MCF 10A (cell line): ENCODE measurements at regions of chr6 and their contacts with region 1.

Region 1: DNA sequence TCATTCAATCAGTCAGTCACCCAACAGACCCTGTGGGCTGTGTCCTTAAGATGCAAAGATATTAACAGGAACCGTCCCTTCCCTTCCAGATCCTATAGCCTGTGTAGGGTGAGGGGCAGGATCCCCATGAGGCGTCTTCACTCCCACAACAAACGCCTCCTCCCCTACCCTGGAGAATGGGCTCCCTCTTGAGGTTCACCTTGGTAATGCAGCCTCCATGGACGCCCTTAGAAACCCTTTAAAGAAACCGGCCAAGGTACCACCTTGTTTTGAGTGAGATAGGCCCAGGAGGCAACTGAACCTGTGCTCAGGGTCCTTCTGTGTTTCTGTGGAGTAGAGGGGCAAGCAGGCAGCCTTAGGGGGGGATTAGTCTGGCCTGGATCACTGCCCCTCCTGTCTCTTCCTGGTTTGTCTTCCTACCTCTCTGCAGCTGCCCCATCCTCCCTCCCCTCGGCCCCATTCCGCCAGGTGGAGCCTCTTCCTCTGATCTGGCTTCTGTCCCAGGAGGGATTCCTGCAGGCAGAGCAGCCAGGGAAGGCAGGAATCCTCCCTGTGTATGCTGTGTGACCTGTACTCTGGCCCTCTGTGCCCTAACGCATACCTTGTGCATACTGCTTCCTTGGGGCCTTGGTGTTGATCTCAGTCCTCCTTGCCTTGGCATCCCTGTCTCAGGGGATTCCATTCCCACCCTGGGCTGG is 6.6 kb upstream of the GUCA1A start:
- DNase-seq: peak; percentile 85
- H3K4me3 Mint-ChIP-seq: no peak overlapping the region
- H3K27ac Mint-ChIP-seq: peak overlapping the region; percentile 22
- H3K4me1 Mint-ChIP-seq: peaks cover 8% of the 10 kb centered on the region
- H3K27me3 Mint-ChIP-seq: no peaks in the 10 kb centered on the region
- CTCF ChIP-seq: peak; percentile 97

Region 2: DNA sequence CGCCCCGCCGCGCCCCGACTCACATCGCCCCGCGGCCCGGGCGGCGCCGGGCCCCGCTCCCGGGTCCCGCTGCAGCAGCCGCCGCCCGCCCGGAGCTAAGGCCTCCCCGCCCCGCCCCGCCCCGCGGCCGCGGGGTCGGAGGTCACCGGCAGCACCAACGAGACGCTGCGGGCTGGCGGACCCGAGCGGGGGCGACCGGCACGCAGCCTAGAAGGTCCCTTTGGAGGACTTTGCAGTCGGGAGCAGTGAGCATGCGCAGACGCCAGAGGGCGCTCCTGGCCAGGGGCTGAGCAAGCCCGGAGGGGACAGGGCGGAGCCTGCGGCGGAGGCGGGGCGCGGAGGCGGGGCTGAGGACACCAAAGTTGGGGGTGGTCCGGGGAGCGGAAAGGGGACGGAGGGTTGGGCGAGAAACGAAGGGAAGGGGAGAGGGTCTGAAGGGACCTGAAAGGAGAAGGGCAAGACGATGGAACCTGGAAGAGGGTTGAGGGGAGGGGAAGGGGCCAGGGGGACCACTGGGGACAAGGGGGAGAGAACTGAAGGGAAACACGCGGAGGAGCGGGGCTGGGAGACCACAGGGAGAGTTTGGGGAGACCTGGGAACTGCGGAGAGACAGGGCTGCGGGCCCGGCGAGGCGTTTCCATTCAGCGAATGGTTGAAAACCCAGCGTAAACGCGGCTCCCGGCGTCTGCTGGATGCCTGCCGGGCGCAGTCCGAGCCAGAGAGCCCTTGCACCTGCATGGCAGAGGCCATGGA is 386.6 kb before region 1 on chr6 and contains the start of gene FRS3:
- CTCF ChIA-PET with region 1: no interaction called
- POLR2A ChIA-PET with region 1: no interaction called
- intact Hi-C with region 1: loop called (anchors 1 kb)
- DNase-seq: peak; percentile 90
- H3K4me3 Mint-ChIP-seq: peak within 1 kb of the TSS; percentile 90
- H3K27ac Mint-ChIP-seq: no peak within 1 kb of the TSS
- H3K4me1 Mint-ChIP-seq: peaks cover 23% of the 10 kb centered on the region
- H3K27me3 Mint-ChIP-seq: no peaks in the 10 kb centered on the region
- CTCF ChIP-seq: peak; percentile 94
- total RNA-seq, gene FRS3: 3.9 and 5.3 TPM in 2 replicates

Region 3: GRCh38 chr6:42030585-42031506 is 135.7 kb before region 1 on chr6:
- CTCF ChIA-PET with region 1: no interaction called
- POLR2A ChIA-PET with region 1: no interaction called
- intact Hi-C with region 1: no loop called
- DNase-seq: no peak
- H3K4me3 Mint-ChIP-seq: no peak overlapping the region
- H3K27ac Mint-ChIP-seq: no peak overlapping the region
- H3K4me1 Mint-ChIP-seq: peaks cover 21% of the 10 kb centered on the region
- H3K27me3 Mint-ChIP-seq: no peaks in the 10 kb centered on the region
- CTCF ChIP-seq: no peak

Region 4: DNA sequence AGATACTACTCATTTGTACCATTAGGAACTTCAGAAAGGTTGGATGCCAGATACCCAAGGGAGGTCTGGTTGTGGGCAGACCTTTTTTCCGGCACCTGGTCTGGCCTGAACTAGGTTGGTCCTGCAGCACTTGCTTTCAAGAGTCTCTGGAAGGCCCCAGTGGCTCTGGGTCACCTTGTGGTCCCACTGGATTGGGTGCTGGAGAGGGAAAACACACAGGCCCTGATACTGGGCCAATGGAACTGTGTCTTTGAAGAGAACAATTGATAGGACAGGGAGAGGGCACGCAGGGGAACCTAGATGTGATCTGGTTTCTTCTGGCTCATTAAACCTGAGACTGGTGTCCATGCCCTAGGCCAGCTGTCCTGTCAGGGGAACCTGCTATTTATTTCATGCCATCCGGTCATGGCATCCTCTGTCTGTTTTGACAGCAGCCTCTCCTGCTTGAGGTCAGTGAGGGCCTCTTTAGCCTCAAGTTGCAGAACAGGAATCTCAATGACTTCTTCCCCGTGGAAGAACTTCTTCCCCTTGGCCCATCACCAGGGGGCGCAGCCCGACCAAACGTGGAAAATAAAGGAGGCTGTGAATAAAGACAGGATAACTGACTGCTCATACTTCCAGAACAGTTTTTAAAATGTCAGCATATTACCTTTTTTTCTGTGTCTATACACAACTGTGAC is 91.3 kb before region 1 on chr6:
- CTCF ChIA-PET with region 1: interaction called, 28 read pairs
- POLR2A ChIA-PET with region 1: no interaction called
- intact Hi-C with region 1: loop called (anchors 1 kb)
- DNase-seq: peak; percentile 69
- H3K4me3 Mint-ChIP-seq: no peak overlapping the region
- H3K27ac Mint-ChIP-seq: no peak overlapping the region
- H3K4me1 Mint-ChIP-seq: no peaks in the 10 kb centered on the region
- H3K27me3 Mint-ChIP-seq: no peaks in the 10 kb centered on the region
- CTCF ChIP-seq: peak; percentile 82

Region 5: GRCh38 chr6:42099340-42100028 is 67.1 kb before region 1 on chr6:
- CTCF ChIA-PET with region 1: interaction called, 5 read pairs
- POLR2A ChIA-PET with region 1: interaction called, 6 read pairs
- intact Hi-C with region 1: loop called (anchors 1 kb)
- DNase-seq: peak; percentile 97
- H3K4me3 Mint-ChIP-seq: peak overlapping the region; percentile 15
- H3K27ac Mint-ChIP-seq: peak overlapping the region; percentile 46
- H3K4me1 Mint-ChIP-seq: peaks cover 30% of the 10 kb centered on the region
- H3K27me3 Mint-ChIP-seq: no peaks in the 10 kb centered on the region
- CTCF ChIP-seq: no peak

Region 6: GRCh38 chr6:42142118-42142931 is 24.3 kb before region 1 on chr6 and contains the start of gene C6orf132:
- CTCF ChIA-PET with region 1: interaction called, 6 read pairs
- POLR2A ChIA-PET with region 1: interaction called, 5 read pairs
- intact Hi-C with region 1: loop called (anchors 1 kb)
- DNase-seq: peak; percentile 63
- H3K4me3 Mint-ChIP-seq: peak within 1 kb of the TSS; percentile 66
- H3K27ac Mint-ChIP-seq: peak within 1 kb of the TSS; percentile 55
- H3K4me1 Mint-ChIP-seq: peaks cover 22% of the 10 kb centered on the region
- H3K27me3 Mint-ChIP-seq: no peaks in the 10 kb centered on the region
- CTCF ChIP-seq: no peak
- total RNA-seq, gene C6orf132: 19.5 and 31.9 TPM in 2 replicates

Region 7: DNA sequence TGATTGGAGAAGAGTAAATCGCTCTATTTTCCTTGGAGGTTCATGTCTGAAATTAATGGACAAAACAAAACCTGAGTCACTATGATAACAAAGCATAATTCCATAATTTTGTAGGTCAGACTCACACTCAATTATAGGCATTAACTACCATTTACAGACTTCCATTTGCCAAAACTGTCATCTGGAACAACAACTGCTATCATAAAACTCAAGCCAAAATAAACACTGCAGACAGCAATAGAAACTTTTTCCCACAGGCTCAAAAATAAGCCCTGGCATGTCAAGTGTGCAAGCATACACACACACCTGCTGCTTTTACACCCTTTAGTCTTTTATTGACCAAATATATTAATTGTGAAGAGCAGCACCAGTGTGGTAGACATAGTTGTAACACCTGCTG is 44.0 kb after region 1 on chr6:
- CTCF ChIA-PET with region 1: interaction called, 27 read pairs
- POLR2A ChIA-PET with region 1: interaction called, 5 read pairs
- intact Hi-C with region 1: loop called (anchors 1 kb)
- DNase-seq: peak; percentile 43
- H3K4me3 Mint-ChIP-seq: no peak overlapping the region
- H3K27ac Mint-ChIP-seq: peak overlapping the region; percentile 63
- H3K4me1 Mint-ChIP-seq: no peaks in the 10 kb centered on the region
- H3K27me3 Mint-ChIP-seq: no peaks in the 10 kb centered on the region
- CTCF ChIP-seq: no peak

Region 8: DNA sequence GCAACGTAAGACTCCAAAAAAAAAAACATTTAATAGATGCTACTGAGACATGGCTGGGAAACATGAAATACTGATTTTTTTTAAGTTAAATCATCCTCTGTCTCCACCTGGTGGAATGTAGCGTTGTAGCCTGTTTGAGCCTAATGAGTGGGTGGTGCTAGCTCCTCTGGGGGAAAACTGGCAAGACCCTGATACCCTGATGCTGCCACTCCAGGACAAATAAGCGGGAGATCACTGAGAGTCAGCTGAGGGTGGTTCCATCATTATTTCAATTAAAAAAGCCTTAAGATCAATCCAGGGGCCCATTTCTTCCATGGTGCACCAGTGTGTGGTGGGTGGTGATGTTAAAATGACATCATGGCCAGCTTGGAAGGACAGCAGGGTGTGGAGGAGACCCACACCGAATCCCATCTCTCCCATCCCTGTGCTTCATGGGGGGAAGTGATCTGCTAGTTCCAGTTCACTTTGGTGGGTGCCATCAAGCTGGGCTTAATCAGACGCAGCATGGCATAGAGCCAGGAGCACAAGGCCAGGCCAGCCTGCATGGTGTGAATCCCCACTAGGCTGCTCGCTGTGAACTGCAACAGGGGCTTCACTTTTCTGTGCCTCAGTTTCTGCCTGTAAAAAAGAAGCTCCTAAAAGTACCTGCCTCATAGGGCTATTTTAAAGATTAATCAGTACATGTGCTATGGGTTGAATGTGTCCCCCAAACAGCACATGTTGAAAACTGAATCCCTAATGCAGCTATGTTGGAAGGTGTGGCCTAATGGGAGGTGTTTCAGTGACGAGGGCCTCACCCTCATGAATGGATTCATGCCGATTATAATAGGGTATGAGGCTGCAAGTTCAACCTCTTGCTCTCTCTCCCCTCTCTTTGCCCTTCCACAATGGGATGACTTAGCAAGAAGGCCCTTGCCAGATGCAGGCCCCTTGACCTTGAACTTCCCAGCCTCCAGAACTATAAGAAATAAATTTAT is 64.0 kb after region 1 on chr6:
- CTCF ChIA-PET with region 1: interaction called, 3 read pairs
- POLR2A ChIA-PET with region 1: no interaction called
- intact Hi-C with region 1: loop called (anchors 5 kb)
- DNase-seq: peak; percentile 36
- H3K4me3 Mint-ChIP-seq: no peak overlapping the region
- H3K27ac Mint-ChIP-seq: peak overlapping the region; percentile 13
- H3K4me1 Mint-ChIP-seq: peaks cover 39% of the 10 kb centered on the region
- H3K27me3 Mint-ChIP-seq: no peaks in the 10 kb centered on the region
- CTCF ChIP-seq: peak; percentile 43